ENCODE measurements at regions of chr2 and their contacts with region 1.

Region 1: GRCh38 chr2:217105733-217106649 is 246.1 kb upstream of the TNP1 start:
- DNase-seq: no peak
- ATAC-seq: no peak
- H3K4me3 Mint-ChIP-seq: no peak overlapping the region
- H3K27ac Mint-ChIP-seq: no peak overlapping the region
- H3K4me1 Mint-ChIP-seq: peaks cover 29% of the 10 kb centered on the region
- H3K27me3 Mint-ChIP-seq: no peaks in the 10 kb centered on the region; the same call in 1 of the 2 replicates
- CTCF ChIP-seq: no peak

Region 2: DNA sequence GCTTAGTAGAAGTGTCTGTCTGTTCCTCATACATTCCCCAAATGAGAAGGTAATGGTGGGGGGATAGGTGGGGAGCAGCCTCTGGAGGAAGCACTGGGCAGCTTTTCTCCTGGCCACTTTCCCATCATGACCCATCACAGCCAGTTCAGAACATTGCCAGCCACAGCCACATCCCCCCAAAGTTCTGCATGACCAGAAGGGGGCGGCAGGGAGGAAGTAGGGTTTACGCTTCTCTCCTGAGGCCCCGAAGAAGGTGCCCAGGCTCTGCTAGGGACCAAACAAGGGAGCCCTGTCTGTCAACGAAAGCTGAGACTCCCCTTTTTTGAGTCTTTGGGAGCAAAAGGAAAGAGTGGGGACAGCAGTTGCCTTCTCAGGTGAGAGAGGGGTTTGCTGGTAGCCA is 418.3 kb before region 1 on chr2:
- CTCF ChIA-PET with region 1: interaction called, 10 read pairs
- POLR2A ChIA-PET with region 1: interaction called, 3 read pairs
- DNase-seq: peak; percentile 84
- ATAC-seq: peak; percentile 67
- H3K4me3 Mint-ChIP-seq: no peak overlapping the region
- H3K27ac Mint-ChIP-seq: no peak overlapping the region
- H3K4me1 Mint-ChIP-seq: peaks cover 34% of the 10 kb centered on the region
- H3K27me3 Mint-ChIP-seq: peaks cover 24% of the 10 kb centered on the region
- CTCF ChIP-seq: peak; percentile 67

Region 3: GRCh38 chr2:217142649-217143266 is 36.8 kb after region 1 on chr2:
- CTCF ChIA-PET with region 1: no interaction called
- POLR2A ChIA-PET with region 1: no interaction called
- DNase-seq: peak; percentile 69
- ATAC-seq: no peak
- H3K4me3 Mint-ChIP-seq: no peak overlapping the region
- H3K27ac Mint-ChIP-seq: no peak overlapping the region
- H3K4me1 Mint-ChIP-seq: no peaks in the 10 kb centered on the region
- H3K27me3 Mint-ChIP-seq: no peaks in the 10 kb centered on the region; the same call in 1 of the 2 replicates
- CTCF ChIP-seq: peak; percentile 67